ENCODE measurements at regions of chr20 and their contacts with region 1.

Region 1: GRCh38 chr20:45779011-45779915 is 12.4 kb downstream of the WFDC3 start:
- DNase-seq: peak; percentile 99
- H3K4me3 ChIP-seq: no peak overlapping the region
- H3K27ac ChIP-seq: peak overlapping the region; percentile 97
- H3K4me1 ChIP-seq: peaks cover 64% of the 10 kb centered on the region
- H3K27me3 ChIP-seq: no peaks in the 10 kb centered on the region
- CTCF ChIP-seq: no peak

Region 2: GRCh38 chr20:45337367-45338120 is 441.7 kb before region 1 on chr20:
- CTCF ChIA-PET with region 1: no interaction called
- dilution Hi-C with region 1: no loop called
- in situ Hi-C with region 1: no loop called
- intact Hi-C with region 1: loop called (anchors 1 kb)
- DNase-seq: peak; percentile 81
- H3K4me3 ChIP-seq: no peak overlapping the region
- H3K27ac ChIP-seq: peak overlapping the region; percentile 96
- H3K4me1 ChIP-seq: peaks cover 71% of the 10 kb centered on the region
- H3K27me3 ChIP-seq: no peaks in the 10 kb centered on the region
- CTCF ChIP-seq: no peak

Region 3: GRCh38 chr20:45523821-45524220 is 255.4 kb before region 1 on chr20:
- CTCF ChIA-PET with region 1: no interaction called
- dilution Hi-C with region 1: loop called (anchors 5 kb)
- in situ Hi-C with region 1: no loop called
- intact Hi-C with region 1: no loop called
- DNase-seq: peak; percentile 38
- H3K4me3 ChIP-seq: no peak overlapping the region
- H3K27ac ChIP-seq: no peak overlapping the region
- H3K4me1 ChIP-seq: peaks cover 12% of the 10 kb centered on the region
- H3K27me3 ChIP-seq: no peaks in the 10 kb centered on the region
- CTCF ChIP-seq: no peak

Region 4: GRCh38 chr20:45798935-45799642 is 19.8 kb after region 1 on chr20:
- CTCF ChIA-PET with region 1: no interaction called
- dilution Hi-C with region 1: no loop called
- in situ Hi-C with region 1: no loop called
- intact Hi-C with region 1: loop called (anchors 2 kb)
- DNase-seq: peak; percentile 37
- H3K4me3 ChIP-seq: no peak overlapping the region
- H3K27ac ChIP-seq: no peak overlapping the region
- H3K4me1 ChIP-seq: no peaks in the 10 kb centered on the region
- H3K27me3 ChIP-seq: no peaks in the 10 kb centered on the region
- CTCF ChIP-seq: peak; percentile 76